ENCODE measurements at regions of chr19 and their contacts with region 1.

Region 1: DNA sequence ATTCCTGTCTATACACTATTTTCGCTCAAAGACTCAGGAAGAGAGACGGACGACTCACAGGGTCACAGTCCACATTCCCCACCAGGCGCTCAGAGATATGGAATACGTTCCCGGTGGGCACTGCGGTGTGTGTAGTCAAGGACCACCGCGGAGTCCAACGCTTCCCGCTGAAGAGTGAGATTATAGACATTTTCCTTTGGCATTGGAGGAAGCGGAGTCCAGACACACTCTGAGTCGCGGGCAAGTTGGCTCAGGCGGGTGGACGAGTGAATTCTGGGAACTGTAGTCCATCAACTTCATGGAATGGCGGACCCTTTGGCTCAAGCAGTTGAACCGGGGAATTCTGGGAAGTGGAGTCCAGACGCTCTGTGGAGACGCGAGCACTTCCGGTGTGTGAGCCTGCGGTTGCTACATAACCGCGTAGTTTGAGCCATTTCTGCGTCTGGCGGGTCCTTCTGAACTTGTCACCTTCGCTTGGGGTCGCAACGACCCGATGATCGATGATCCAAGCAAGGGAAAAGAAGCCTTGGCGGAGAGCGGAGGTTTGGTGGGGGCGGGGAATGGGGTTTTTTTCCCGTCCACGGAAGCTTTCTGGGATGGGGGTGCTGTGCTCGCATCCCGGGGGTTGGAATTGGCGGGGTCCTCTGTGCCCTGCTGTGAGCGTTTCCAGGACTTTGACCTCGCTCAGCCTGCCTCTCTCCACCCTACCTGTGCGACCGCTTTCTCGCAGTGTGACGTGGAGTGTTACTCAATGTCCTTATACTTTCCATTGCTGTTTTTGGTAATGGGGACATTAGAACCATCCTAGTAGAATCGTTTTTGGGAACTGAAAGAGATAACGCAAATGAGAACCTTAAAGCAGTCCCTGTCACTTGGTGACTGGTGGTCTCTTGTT is at the start of gene ZNF230:
- DNase-seq: peak; percentile 50 to 85 (median 77)
- ATAC-seq: peak; percentile 99
- H3K4me3 ChIP-seq: peak within 1 kb of the TSS; percentile 88
- H3K4me3 Mint-ChIP-seq: peak within 1 kb of the TSS; percentile 96 to 100 (median 99)
- H3K27ac ChIP-seq: peak within 1 kb of the TSS; percentile 80
- H3K27ac Mint-ChIP-seq: peak within 1 kb of the TSS; percentile 87 to 98 (median 95)
- H3K4me1 ChIP-seq: peaks cover 0 to 8% of the 10 kb centered on the region in 2 donors
- H3K4me1 Mint-ChIP-seq: peaks cover 15 to 32% (median 20%) of the 10 kb centered on the region in 7 donors
- H3K27me3 ChIP-seq: no peaks in the 10 kb centered on the region
- H3K27me3 Mint-ChIP-seq: peaks cover 0 to 2% (median 0%) of the 10 kb centered on the region in 5 donors
- total RNA-seq, gene ZNF230: 2.7 to 18.1 (median 6.7) TPM

Region 2: DNA sequence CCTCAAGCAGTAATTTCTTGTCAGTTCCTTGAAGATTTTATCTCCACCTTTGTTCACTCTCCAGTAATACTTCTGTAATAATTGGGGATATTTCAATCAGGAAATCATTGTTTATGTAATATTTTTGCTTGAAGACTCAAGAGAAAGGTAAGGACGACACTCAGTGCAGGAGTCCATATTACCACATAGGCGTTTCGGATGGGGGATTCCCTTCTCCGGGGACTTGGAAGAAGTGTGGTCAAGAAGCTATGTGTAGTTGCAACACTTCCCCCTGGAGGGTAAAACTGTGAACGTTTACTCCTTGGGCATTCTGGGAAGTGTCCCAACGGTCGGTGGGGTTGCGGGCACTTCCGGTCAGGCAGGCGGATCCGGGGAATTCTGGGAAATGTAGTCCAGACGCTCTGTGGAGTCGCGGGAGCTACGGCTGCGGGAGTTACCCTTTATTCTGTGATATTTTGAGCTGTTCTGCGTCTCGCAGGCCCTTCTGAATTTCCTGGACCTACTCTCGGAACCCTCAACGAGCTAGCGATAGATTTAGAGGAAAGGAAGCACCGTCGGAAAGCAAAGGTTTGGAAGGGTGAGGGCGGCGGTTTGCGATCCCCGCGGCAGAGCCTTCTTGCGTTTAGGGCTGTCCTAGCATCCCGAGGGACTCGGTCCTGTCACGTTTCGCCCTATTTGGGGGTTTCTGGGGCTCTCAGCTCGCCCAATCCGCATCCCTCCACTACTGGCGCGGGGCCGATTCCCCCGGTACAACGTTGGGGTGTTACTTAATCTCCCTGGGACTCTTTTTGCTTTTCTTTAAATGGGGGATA is 51.8 kb before region 1 on chr19 and contains the start of gene ZNF221:
- CTCF ChIA-PET with region 1: no interaction called
- POLR2A ChIA-PET with region 1: no interaction called
- intact Hi-C with region 1: loop called in 1 of 2 experiments (anchors 1 kb)
- DNase-seq: peak in 8 of 9 donors; percentile 8 to 64 (median 28)
- ATAC-seq: peak; percentile 88
- H3K4me3 ChIP-seq: peak within 1 kb of the TSS; percentile 91
- H3K4me3 Mint-ChIP-seq: peak within 1 kb of the TSS; percentile 91 to 98 (median 96)
- H3K27ac ChIP-seq: peak within 1 kb of the TSS; percentile 28
- H3K27ac Mint-ChIP-seq: peak within 1 kb of the TSS in 8 of 9 donors; percentile 44 to 92 (median 80)
- H3K4me1 ChIP-seq: peaks cover 0 to 5% of the 10 kb centered on the region in 2 donors
- H3K4me1 Mint-ChIP-seq: peaks cover 6 to 17% (median 11%) of the 10 kb centered on the region in 7 donors
- H3K27me3 ChIP-seq: no peaks in the 10 kb centered on the region
- H3K27me3 Mint-ChIP-seq: peaks cover 0 to 40% (median 21%) of the 10 kb centered on the region in 5 donors
- total RNA-seq, gene ZNF221: 0.69 to 2.0 (median 1.7) TPM

Region 3: DNA sequence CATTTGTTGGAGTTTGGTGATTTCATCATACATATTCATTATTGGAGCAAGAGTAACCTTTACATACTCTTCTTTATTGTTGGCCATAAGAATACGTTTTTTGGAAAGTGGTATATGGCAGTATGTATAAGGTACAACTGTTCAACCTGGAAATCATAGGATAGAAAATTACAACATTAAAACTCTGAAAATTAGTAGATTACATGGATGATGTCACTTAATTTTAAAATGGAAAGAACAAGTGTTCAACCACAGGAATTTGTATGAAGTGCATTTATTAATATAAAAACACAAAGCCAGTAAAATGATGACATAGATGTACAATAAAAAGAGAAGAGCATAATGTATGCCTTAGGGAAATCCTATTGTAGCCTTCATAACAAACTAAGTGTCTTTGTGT is 26.1 kb before region 1 on chr19:
- CTCF ChIA-PET with region 1: no interaction called
- POLR2A ChIA-PET with region 1: no interaction called
- intact Hi-C with region 1: no loop called
- DNase-seq: no peak
- ATAC-seq: no peak
- H3K4me3 ChIP-seq: no peak overlapping the region
- H3K4me3 Mint-ChIP-seq: no peak overlapping the region
- H3K27ac ChIP-seq: no peak overlapping the region
- H3K27ac Mint-ChIP-seq: no peak overlapping the region
- H3K4me1 ChIP-seq: no peaks in the 10 kb centered on the region
- H3K4me1 Mint-ChIP-seq: no peaks in the 10 kb centered on the region
- H3K27me3 ChIP-seq: no peaks in the 10 kb centered on the region
- H3K27me3 Mint-ChIP-seq: peaks cover 0 to 8% (median 0%) of the 10 kb centered on the region in 5 donors

Region 4: DNA sequence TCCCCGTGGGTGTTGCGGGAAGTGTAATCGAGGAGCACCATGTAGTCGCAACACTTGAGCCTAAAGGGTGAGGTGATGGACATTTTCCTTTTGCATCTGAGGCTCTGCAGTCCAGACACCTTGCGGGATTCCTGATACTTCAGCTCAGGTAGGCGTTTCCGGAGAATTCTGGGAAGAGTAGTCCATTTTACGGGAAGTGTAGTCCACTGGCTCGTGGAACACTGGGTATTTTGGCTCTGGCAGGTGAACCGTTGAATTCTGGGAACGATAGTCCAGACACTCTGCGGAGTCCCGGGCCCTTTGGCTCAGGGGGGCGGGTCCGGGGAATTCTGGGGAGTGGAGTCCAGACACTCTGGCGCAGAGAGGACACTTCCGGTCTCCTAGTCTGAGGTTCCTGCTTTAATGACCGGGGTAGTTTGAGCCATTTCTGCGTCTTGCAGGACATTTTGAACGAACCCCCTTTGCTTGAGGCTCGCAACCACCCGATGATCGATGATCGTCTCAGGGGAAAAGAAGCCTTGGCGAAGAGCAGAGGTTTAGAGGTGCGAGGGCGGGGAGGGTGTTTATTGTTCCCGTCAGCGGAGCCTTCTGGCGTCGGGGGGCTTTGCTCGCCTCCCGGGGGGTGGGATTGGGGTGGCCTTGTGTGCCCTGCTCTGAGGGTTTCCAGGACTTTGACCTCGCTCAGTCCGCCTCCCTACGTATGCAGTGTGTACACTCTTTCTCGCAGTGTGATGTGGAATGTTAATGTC is 49.0 kb after region 1 on chr19 and contains the start of gene ZNF223:
- CTCF ChIA-PET with region 1: no interaction called
- POLR2A ChIA-PET with region 1: interaction called, 3 read pairs
- intact Hi-C with region 1: loop called in 1 of 2 experiments (anchors 1 kb)
- DNase-seq: peak in 8 of 9 donors; percentile 14 to 52 (median 40)
- ATAC-seq: peak; percentile 85
- H3K4me3 ChIP-seq: peak within 1 kb of the TSS; percentile 58
- H3K4me3 Mint-ChIP-seq: peak within 1 kb of the TSS; percentile 71 to 98 (median 96)
- H3K27ac ChIP-seq: peak within 1 kb of the TSS; percentile 53
- H3K27ac Mint-ChIP-seq: peak within 1 kb of the TSS in 8 of 9 donors; percentile 36 to 91 (median 82)
- H3K4me1 ChIP-seq: no peaks in the 10 kb centered on the region
- H3K4me1 Mint-ChIP-seq: peaks cover 7 to 36% (median 28%) of the 10 kb centered on the region in 7 donors
- H3K27me3 ChIP-seq: no peaks in the 10 kb centered on the region
- H3K27me3 Mint-ChIP-seq: peaks cover 0 to 22% (median 13%) of the 10 kb centered on the region in 5 donors
- total RNA-seq, gene ZNF223: 0.15 to 8.7 (median 2.3) TPM

Region 5: GRCh38 chr19:44141191-44142058 is 138.6 kb after region 1 on chr19 and contains the start of gene ZNF234:
- CTCF ChIA-PET with region 1: no interaction called
- POLR2A ChIA-PET with region 1: no interaction called
- intact Hi-C with region 1: loop called in 1 of 2 experiments (anchors 1 kb)
- DNase-seq: peak; percentile 29 to 69 (median 56)
- ATAC-seq: peak; percentile 92
- H3K4me3 ChIP-seq: peak within 1 kb of the TSS; percentile 80
- H3K4me3 Mint-ChIP-seq: peak within 1 kb of the TSS; percentile 90 to 97 (median 96)
- H3K27ac ChIP-seq: peak within 1 kb of the TSS; percentile 77
- H3K27ac Mint-ChIP-seq: peak within 1 kb of the TSS; percentile 64 to 94 (median 88)
- H3K4me1 ChIP-seq: peaks cover 0 to 12% of the 10 kb centered on the region in 2 donors
- H3K4me1 Mint-ChIP-seq: peaks cover 14 to 30% (median 25%) of the 10 kb centered on the region in 7 donors
- H3K27me3 ChIP-seq: no peaks in the 10 kb centered on the region
- H3K27me3 Mint-ChIP-seq: no peaks in the 10 kb centered on the region
- total RNA-seq, gene ZNF234: 2.8 to 25.2 (median 13.4) TPM

Region 6: DNA sequence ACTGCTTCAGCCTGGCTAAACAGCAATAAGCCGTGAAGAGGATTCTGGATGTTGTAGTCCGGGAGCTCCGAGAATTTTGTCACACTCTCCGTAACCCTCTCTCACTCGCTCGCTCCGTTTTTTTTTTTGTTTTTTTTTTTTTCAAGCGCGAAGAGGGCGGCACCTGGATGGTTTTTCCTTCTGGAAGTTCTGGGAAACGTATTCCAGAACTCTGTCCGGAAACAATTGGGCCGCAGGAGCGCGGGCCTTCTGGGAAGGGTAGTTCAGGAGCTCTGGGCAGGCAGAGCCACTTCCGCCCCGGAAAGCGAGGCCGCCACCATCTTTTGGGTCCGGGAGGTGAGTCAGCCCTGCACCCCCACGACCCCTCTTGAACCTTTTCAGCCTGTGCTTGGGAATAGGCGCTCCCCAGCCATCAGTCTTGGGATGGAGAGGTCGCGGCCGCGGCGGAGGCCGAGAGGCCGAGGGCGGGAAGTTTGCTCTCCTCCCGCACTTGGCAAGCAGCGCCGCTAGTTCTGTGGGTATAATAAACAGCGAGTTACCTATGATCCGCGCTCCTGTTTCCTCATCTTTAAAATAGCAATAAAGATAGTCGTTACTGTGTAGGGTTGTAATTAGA is 209.5 kb after region 1 on chr19 and contains the start of gene ZNF227:
- CTCF ChIA-PET with region 1: no interaction called
- POLR2A ChIA-PET with region 1: interaction called, 3 read pairs
- intact Hi-C with region 1: loop called (anchors 1 kb)
- DNase-seq: peak; percentile 47 to 80 (median 75)
- ATAC-seq: peak; percentile 98
- H3K4me3 ChIP-seq: peak within 1 kb of the TSS; percentile 98
- H3K4me3 Mint-ChIP-seq: peak within 1 kb of the TSS; percentile 85 to 100 (median 96)
- H3K27ac ChIP-seq: peak within 1 kb of the TSS; percentile 81
- H3K27ac Mint-ChIP-seq: peak within 1 kb of the TSS; percentile 82 to 97 (median 92)
- H3K4me1 ChIP-seq: peaks cover 0 to 15% of the 10 kb centered on the region in 2 donors
- H3K4me1 Mint-ChIP-seq: peaks cover 19 to 45% (median 31%) of the 10 kb centered on the region in 7 donors
- H3K27me3 ChIP-seq: no peaks in the 10 kb centered on the region
- H3K27me3 Mint-ChIP-seq: peaks cover 0 to 4% (median 0%) of the 10 kb centered on the region in 5 donors
- total RNA-seq, gene ZNF227: 18.3 to 51.5 (median 30.0) TPM